ENCODE measurements at regions of chr11 and their contacts with region 1.

Region 1: DNA sequence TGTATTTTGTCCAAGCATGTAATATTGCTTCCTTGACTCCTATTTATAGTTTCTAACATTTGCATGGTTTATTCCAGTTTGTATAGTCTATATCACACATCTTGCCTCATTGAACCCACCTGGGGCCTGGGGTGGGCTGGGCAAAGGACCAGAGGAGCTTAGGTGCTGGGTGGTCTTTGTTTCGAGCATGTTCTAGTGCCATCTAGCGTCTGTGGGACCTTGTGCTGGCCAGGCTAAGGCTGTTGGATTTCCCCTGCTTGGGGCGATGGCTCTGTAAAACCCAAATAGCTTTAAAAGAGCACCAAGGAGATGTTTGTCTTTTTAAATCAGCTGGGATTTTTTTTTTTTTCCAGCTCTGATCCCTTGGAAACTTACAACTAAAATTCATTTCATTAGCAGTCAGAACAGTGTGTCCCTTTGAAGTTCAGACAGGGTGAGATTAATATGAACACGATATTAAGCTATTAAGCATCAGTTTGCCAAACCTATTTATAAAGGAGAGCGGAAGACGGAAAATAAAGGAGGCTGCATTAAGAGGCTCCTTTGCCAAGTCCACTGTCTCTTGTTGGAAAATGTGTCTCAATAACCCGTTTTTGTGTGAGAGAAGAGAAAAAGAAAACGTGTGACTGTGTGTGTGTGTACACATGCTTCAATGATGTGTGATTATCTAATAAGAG is 157.4 kb downstream of the COMMD9 start:
- DNase-seq: peak; percentile 52 to 57
- ATAC-seq: peak; percentile 60 to 92 (median 76)
- H3K4me3 ChIP-seq: no peak overlapping the region
- H3K27ac ChIP-seq: no peak overlapping the region
- H3K4me1 ChIP-seq: no peaks in the 10 kb centered on the region
- H3K27me3 ChIP-seq: no peaks in the 10 kb centered on the region
- CTCF ChIP-seq: peak; percentile 69

Region 2: GRCh38 chr11:36041988-36042611 is 89.8 kb before region 1 on chr11:
- intact Hi-C with region 1: loop called in 1 of 2 experiments (anchors 2 kb)
- DNase-seq: no peak
- ATAC-seq: no peak
- H3K4me3 ChIP-seq: no peak overlapping the region
- H3K27ac ChIP-seq: no peak overlapping the region
- H3K4me1 ChIP-seq: peaks cover 5% of the 10 kb centered on the region
- H3K27me3 ChIP-seq: no peaks in the 10 kb centered on the region
- CTCF ChIP-seq: peak; percentile 47

Region 3: DNA sequence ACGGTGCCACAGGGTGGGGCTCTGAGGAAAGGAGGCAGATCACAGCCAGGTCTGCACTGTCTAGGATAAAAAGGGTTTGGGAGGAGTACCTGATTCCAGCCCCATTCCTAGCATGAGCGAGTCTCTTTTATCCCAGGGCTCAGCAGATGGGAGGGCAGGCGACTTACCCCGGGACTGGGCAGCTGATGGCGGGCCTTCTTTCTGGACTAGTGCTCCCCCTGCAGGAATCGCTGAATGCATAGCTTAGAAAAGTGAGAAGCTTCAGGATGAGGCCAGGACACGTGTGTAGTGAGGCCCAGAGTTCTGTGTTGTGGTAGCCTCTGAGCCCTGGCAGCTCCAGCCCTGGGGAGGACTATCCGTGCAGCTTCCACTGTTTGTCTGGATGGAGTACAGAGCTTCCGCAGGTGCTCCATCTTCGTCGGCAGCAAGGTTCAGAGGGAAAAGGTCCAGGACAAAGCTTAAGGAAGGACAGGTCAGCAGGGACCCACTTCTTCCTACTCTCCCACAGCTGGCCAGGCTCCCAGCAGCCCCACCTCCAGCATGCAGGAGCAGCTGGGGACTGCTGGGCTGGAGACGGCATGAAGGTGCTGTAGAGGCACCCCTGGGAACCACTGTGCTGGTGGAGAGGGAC is 127.0 kb after region 1 on chr11:
- intact Hi-C with region 1: loop called in 1 of 2 experiments (anchors 5 kb)
- DNase-seq: peak; percentile 49 to 69
- ATAC-seq: peak; percentile 86 to 95 (median 88)
- H3K4me3 ChIP-seq: no peak overlapping the region
- H3K27ac ChIP-seq: no peak overlapping the region
- H3K4me1 ChIP-seq: no peaks in the 10 kb centered on the region
- H3K27me3 ChIP-seq: no peaks in the 10 kb centered on the region
- CTCF ChIP-seq: peak; percentile 53

Measured in psoas muscle (tissue), 8 donors.